ENCODE measurements at regions of chr1 and their contacts with region 1.

Region 1: GRCh38 chr1:114737314-114737849 is 20.4 kb downstream of the CSDE1 start:
- DNase-seq: no peak
- H3K4me3 ChIP-seq: no peak overlapping the region
- H3K27ac ChIP-seq: no peak overlapping the region
- H3K4me1 ChIP-seq: no peaks in the 10 kb centered on the region
- H3K27me3 ChIP-seq: no peaks in the 10 kb centered on the region
- CTCF ChIP-seq: no peak

Region 2: DNA sequence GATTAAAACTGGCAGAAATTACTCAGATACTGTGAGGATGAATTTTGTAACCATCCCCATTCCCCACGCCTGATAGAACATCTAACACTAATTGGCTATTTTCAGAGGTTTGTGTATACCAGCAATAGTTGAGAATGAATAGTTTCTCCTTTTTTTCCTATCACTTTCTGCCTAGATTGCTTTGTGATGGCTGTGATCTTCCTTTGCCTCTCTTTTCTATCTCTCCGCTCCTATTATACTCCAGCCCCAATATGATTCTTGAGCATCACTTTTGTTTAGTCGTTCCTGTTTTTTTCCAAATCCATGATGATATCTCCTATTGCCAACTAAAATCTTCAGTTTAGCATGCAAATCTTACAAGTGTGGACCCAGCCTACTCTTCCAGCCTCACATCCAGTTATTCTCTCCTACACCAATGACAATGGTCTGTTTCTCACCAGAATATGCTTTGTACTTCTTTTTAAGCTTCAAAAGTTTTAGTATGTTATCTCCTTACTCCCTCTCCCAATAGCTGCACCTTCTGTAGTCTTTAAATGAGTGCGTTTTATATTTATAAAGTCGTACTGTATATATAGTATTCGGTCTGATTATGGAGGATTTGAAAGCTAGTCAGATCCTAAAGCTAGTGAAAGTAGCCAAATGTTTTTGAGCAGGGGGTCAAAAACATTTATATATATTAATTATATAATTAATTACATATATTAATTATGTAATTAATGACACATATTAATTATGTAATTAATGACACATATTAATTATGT is 1321.9 kb before region 1 on chr1:
- CTCF ChIA-PET with region 1: no interaction called
- POLR2A ChIA-PET with region 1: interaction called, 15 read pairs
- intact Hi-C with region 1: no loop called
- DNase-seq: no peak
- H3K4me3 ChIP-seq: no peak overlapping the region
- H3K27ac ChIP-seq: no peak overlapping the region
- H3K4me1 ChIP-seq: no peaks in the 10 kb centered on the region
- H3K27me3 ChIP-seq: no peaks in the 10 kb centered on the region
- CTCF ChIP-seq: no peak

Region 3: GRCh38 chr1:114677691-114678090 is 59.7 kb before region 1 on chr1:
- CTCF ChIA-PET with region 1: no interaction called
- POLR2A ChIA-PET with region 1: no interaction called
- intact Hi-C with region 1: no loop called
- DNase-seq: no peak
- H3K4me3 ChIP-seq: no peak overlapping the region
- H3K27ac ChIP-seq: no peak overlapping the region
- H3K4me1 ChIP-seq: no peaks in the 10 kb centered on the region
- H3K27me3 ChIP-seq: 0 out of 2 replicates have a peak, but pooled peaks cover 12% of the 10 kb centered on the region
- CTCF ChIP-seq: no peak

Measured in PC-9 (cell line).